GM12878 (cell line): ENCODE measurements at regions of chr15 and their contacts with region 1.

Region 1: GRCh38 chr15:52233405-52233804 is 42.2 kb upstream of the GNB5 start:
- DNase-seq: no peak
- ATAC-seq: peak; percentile 79
- H3K4me3 ChIP-seq: peak overlapping the region; percentile 7; the same call in 1 of the 2 replicates
- H3K27ac ChIP-seq: peak overlapping the region; percentile 49
- H3K4me1 ChIP-seq: peaks cover 56% of the 10 kb centered on the region
- H3K27me3 ChIP-seq: no peaks in the 10 kb centered on the region
- CTCF ChIP-seq: no peak
- EP300 ChIP-seq: no peak
- POLR2A ChIP-seq: no peak
- RAD21 ChIP-seq: no peak

Region 2: GRCh38 chr15:52217186-52217585 is 16.2 kb before region 1 on chr15:
- CTCF ChIA-PET with region 1: interaction called, 207 read pairs
- POLR2A ChIA-PET with region 1: interaction called, 3 read pairs
- RAD21 ChIA-PET with region 1: interaction called, 40 read pairs
- SMC1A ChIA-PET with region 1: interaction called, 80 read pairs
- in situ Hi-C with region 1: no loop called
- intact Hi-C with region 1: no loop called
- DNase-seq: no peak
- ATAC-seq: peak; percentile 74
- H3K4me3 ChIP-seq: no peak overlapping the region
- H3K27ac ChIP-seq: no peak overlapping the region
- H3K4me1 ChIP-seq: peaks cover 15% of the 10 kb centered on the region
- H3K27me3 ChIP-seq: no peaks in the 10 kb centered on the region
- CTCF ChIP-seq: peak; percentile 57 to 73 (median 58)
- EP300 ChIP-seq: no peak
- POLR2A ChIP-seq: no peak
- RAD21 ChIP-seq: peak; percentile 43; the same call in 1 of the 2 replicates